Common myeloid progenitor, CD34-positive (primary cell): ENCODE measurements at regions of chr12 and their contacts with region 1.

Region 1: DNA sequence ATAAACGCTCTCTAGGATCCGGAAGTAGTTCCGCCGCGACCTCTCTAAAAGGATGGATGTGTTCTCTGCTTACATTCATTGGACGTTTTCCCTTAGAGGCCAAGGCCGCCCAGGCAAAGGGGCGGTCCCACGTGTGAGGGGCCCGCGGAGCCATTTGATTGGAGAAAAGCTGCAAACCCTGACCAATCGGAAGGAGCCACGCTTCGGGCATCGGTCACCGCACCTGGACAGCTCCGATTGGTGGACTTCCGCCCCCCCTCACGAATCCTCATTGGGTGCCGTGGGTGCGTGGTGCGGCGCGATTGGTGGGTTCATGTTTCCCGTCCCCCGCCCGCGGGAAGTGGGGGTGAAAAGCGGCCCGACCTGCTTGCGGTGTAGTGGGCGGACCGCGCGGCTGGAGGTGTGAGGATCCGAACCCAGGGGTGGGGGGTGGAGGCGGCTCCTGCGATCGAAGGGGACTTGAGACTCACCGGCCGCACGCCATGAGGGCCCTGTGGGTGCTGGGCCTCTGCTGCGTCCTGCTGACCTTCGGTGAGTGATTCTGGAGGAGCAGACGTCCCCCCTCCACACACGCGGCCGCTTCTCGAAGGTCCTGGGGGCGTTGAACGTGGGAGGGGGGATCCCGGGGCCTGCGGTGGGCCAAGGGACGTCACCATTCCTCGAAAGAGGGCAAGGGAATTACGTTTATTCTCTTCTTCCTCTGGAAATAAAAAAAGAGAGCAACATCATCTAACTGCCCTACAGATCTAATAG is at the start of gene HSP90B1:
- DNase-seq: peak; percentile 100
- H3K4me3 ChIP-seq: peak within 1 kb of the TSS; percentile 47 to 99 (median 89)
- H3K27ac ChIP-seq: peak within 1 kb of the TSS; percentile 99 to 100
- H3K4me1 ChIP-seq: peaks cover 24 to 46% (median 34%) of the 10 kb centered on the region in 4 experiments
- H3K27me3 ChIP-seq: no peaks in the 10 kb centered on the region

Region 2: DNA sequence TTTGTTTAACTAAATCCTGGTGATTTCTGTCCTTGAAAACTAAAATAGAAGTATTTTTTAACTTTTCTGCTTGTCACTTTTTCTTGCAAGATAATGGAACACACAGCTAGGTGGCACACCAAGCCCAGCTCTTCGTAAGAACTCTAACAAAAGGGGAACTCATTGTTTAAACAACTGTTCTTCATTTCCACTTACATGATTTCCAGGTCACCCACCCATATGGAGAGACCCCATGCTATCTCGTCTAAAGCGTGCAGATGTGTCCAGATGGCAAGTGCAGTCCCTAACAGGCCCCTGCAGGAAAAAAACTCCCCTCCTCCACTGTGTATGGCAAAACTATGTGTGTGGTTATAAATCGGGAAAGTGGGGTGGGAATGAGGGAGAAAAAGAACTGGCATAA is 45.9 kb before region 1 on chr12:
- CTCF ChIA-PET with region 1: interaction called, 37 read pairs
- POLR2A ChIA-PET with region 1: interaction called, 15 read pairs
- DNase-seq: peak; percentile 81 to 91 (median 90)
- H3K4me3 ChIP-seq: peak overlapping the region in 1 of 7 experiments; percentile 17
- H3K27ac ChIP-seq: no peak overlapping the region
- H3K4me1 ChIP-seq: peaks cover 9 to 30% (median 20%) of the 10 kb centered on the region in 4 experiments
- H3K27me3 ChIP-seq: no peaks in the 10 kb centered on the region

Region 3: GRCh38 chr12:103965590-103966504 is 35.6 kb after region 1 on chr12 and contains the start of gene TDG:
- CTCF ChIA-PET with region 1: no interaction called
- POLR2A ChIA-PET with region 1: interaction called, 25 read pairs
- DNase-seq: peak; percentile 99 to 100 (median 99)
- H3K4me3 ChIP-seq: peak within 1 kb of the TSS; percentile 67 to 98 (median 84)
- H3K27ac ChIP-seq: peak within 1 kb of the TSS; percentile 88 to 95
- H3K4me1 ChIP-seq: peaks cover 7 to 26% (median 19%) of the 10 kb centered on the region in 4 experiments
- H3K27me3 ChIP-seq: no peaks in the 10 kb centered on the region

Region 4: DNA sequence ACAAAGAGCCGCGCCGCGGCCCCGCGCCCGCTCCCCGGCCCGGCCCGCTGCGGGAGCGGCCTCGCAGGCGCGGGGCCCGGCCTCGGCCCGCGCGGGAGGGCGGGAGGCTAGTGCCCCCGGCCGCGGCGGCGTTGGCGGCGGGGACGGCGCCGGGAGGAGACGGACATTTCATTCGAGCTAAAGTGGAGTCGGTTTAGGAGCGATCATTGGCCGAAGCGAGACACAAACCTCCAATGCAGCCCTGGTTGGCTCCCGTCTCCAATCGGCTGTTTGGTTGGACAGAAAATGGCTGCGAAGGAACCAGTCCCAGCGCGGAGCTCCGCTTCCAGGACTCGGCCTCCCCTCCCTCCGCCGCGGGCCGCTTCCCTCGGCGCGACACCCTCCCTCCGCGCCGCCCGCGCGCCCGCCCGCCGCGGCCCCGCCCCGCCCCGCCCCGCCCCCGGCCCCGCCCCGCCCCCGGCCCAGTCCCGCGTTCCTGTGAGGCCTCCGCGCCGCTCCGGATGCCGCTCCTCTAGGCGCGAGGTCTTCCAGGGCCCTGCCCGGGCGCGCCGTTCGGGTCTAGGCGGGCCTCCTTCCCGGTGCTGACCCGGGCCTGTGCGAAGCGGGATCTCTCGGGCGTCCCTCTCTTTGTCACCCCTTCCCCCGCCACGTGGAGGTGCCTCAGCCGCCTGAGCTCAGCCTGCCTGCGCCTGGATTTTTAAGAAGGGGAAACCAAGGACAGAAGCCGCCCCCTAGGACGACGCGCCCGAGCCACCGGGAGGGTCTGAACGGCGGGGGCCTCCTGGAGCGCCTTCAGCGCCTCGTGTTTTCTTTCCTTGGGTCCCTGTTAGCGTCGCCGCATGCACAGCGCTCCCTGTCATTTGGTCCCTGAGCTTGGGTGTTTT is 207.9 kb after region 1 on chr12 and contains the start of gene NFYB:
- CTCF ChIA-PET with region 1: no interaction called
- POLR2A ChIA-PET with region 1: interaction called, 11 read pairs
- DNase-seq: peak; percentile 95 to 99 (median 99)
- H3K4me3 ChIP-seq: peak within 1 kb of the TSS; percentile 66 to 92 (median 77)
- H3K27ac ChIP-seq: peak within 1 kb of the TSS; percentile 65 to 90
- H3K4me1 ChIP-seq: peaks cover 8 to 39% (median 22%) of the 10 kb centered on the region in 4 experiments
- H3K27me3 ChIP-seq: no peaks in the 10 kb centered on the region

Region 5: DNA sequence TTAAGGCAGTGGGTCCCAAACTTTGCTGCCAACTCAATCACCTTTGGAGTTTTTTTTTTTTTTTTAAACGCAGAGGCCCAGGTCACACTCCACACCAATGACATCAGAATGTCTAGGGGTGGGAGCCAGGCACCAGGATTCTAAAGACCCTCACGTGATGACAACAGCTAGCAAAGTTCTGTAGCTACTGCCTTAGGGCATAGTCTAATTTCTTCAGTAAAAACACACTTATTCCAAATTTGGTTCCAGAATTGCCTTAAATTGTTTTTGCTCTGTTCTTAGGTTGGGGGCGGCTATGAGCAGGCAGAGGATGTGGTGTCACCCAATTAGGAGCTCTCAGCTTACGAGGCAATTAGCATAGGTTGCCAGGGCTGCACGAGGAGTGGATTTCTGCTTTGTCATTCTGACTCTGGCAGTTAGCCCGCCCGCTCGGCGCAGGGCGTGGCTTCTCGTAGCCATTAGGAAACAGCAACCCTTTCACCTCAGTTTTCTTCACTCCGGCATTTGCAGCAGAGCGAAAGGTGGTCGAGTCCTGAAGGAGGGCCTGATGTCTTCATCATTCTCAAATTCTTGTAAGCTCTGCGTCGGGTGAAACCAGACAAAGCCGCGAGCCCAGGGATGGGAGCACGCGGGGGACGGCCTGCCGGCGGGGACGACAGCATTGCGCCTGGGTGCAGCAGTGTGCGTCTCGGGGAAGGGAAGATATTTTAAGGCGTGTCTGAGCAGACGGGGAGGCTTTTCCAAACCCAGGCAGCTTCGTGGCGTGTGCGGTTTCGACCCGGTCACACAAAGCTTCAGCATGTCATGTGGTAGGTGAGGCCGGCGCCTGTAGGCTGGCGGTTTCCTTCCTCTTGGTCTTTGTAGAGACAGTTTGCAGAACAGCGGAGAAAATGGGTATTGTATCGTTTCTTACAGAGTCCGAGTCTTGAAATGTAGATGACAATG is 356.6 kb after region 1 on chr12:
- CTCF ChIA-PET with region 1: interaction called, 3 read pairs
- POLR2A ChIA-PET with region 1: interaction called, 13 read pairs
- DNase-seq: peak; percentile 97 to 99 (median 99)
- H3K4me3 ChIP-seq: peak overlapping the region; percentile 76 to 95 (median 87)
- H3K27ac ChIP-seq: peak overlapping the region; percentile 96 to 98
- H3K4me1 ChIP-seq: peaks cover 28 to 39% (median 31%) of the 10 kb centered on the region in 4 experiments
- H3K27me3 ChIP-seq: no peaks in the 10 kb centered on the region